ENCODE measurements at regions of chr11 and their contacts with region 1.

Region 1: GRCh38 chr11:17504330-17505107 is 27.9 kb upstream of the ABCC8 start:
- DNase-seq: peak; percentile 77
- ATAC-seq: peak; percentile 50 to 84 (median 70)
- H3K4me3 ChIP-seq: no peak overlapping the region
- H3K27ac ChIP-seq: no peak overlapping the region
- H3K4me1 ChIP-seq: peaks cover 0 to 27% (median 13%) of the 10 kb centered on the region in 9 donors
- H3K27me3 ChIP-seq: peaks cover 0 to 10% (median 0%) of the 10 kb centered on the region in 7 donors
- CTCF ChIP-seq: peak; percentile 81 to 94 (median 90)

Region 2: DNA sequence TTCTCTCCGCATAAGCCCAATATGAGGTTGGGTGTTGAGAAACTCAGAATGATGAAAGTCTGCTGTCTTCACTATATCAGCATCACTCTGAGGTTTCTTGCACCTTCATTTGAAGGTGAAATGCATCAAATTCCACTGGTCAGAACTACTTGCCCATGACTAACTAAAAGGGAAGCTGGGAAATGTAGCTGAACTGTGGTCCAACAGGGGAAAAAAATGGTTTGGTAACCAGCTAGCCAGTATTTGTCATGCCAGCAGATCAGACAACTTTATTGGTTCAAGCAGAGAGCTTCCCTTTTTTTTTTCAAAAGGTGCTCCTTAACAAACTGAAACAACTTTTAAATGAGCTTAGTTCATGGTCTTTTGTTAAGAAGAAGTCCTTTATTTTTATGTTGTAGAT is 282.6 kb before region 1 on chr11:
- intact Hi-C with region 1: loop called in 2 of 10 experiments (anchors 5 to 10 kb)
- DNase-seq: no peak
- ATAC-seq: no peak
- H3K4me3 ChIP-seq: no peak overlapping the region
- H3K27ac ChIP-seq: no peak overlapping the region
- H3K4me1 ChIP-seq: peaks cover 0 to 13% (median 0%) of the 10 kb centered on the region in 9 donors
- H3K27me3 ChIP-seq: no peaks in the 10 kb centered on the region
- CTCF ChIP-seq: no peak

Region 3: DNA sequence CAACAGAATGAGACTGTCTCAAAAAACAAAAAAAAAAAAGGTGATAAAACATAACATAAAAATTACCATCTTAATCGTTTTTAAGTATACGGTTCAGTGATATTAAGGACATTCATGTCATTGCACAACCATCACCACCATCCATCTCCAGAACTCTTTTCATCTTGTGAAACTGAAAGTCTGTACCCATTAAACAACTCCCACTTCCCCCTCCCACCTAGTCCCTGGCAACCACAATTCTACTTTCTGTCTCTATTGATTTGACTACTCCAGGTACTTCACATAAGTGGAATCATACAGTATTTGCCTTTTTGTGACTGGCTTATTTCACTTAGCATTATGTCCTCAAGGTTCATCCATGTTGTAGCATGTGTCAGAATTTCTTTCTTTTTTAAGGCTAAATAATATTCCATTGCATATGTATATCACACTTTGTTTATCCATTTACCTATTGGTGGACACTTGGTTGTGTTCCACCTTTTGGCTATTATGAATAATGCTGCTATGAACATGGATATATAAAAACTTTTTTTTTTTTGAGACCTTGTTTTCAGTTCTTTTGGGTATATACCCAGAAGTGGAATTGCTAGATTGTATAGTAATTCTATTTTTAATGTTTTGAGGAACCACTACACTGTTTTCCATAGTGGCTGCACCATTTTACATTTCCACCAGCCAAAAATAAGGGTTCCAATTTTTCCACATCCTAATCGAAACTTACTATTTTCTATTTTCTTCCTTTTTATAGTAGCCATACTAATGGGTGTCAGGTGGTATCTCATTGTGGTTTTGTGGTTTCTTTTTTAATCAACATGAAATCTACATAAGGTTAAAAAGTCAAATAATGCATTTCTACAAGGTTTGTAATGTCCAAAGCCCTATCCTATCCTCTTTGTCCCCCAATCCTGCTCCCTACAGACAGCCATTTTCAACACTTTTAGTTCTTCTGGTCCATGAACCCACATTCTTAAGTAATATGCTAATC is 273.4 kb before region 1 on chr11:
- intact Hi-C with region 1: loop called in 8 of 10 experiments (anchors 5 to 10 kb)
- DNase-seq: no peak
- ATAC-seq: no peak
- H3K4me3 ChIP-seq: no peak overlapping the region
- H3K27ac ChIP-seq: no peak overlapping the region
- H3K4me1 ChIP-seq: peaks cover 0 to 12% (median 0%) of the 10 kb centered on the region in 9 donors
- H3K27me3 ChIP-seq: no peaks in the 10 kb centered on the region
- CTCF ChIP-seq: no peak

Region 4: GRCh38 chr11:17300372-17300771 is 204.1 kb before region 1 on chr11:
- intact Hi-C with region 1: no loop called
- DNase-seq: no peak
- ATAC-seq: no peak
- H3K4me3 ChIP-seq: no peak overlapping the region
- H3K27ac ChIP-seq: no peak overlapping the region
- H3K4me1 ChIP-seq: no peaks in the 10 kb centered on the region
- H3K27me3 ChIP-seq: no peaks in the 10 kb centered on the region
- CTCF ChIP-seq: no peak

Region 5: DNA sequence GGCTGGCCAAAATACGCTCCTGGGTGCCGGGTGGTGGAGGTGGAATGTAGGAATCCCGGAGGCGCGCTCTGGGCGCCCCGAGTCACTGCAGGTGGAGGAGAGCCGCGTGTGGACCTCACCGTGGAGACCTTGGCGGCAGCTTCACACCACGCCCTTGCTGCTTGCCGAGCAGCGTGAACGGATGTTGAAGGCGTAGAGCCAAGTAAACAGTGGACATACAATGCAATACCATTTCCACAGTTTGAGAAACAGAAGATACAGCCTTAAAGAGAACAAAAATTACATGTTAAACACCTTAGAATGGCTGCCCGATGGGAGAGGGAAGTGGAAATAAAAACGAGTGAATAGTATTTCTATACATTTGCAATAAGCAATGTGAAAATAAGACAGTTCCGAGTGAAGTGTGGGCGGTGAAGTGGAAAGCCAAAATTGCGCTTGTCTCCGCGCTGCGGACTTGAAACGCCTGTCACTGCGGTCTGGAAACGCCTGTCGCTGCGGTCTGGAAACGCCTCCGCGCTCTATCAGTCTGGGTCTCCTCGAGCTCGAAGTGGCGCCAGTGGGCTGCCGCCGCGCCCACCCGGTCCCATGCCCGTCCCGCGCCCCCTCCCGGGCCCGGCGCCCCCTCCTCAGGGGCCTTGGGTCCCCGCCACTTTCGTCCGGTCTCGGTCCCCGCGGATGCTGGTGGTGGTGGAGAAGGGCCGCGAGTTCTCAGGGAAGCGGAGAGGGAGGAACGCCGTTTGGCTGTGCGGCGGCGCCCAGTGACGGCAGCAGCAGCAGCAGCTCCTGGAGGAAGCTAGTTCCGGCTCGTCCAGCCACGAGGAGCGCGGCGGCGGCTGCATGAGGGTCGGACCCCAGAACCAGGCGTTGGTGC is 151.3 kb before region 1 on chr11:
- intact Hi-C with region 1: no loop called
- DNase-seq: peak; percentile 72 to 76
- ATAC-seq: peak; percentile 82 to 90 (median 85)
- H3K4me3 ChIP-seq: peak overlapping the region; percentile 50 to 77 (median 71)
- H3K27ac ChIP-seq: peak overlapping the region; percentile 68 to 89 (median 83)
- H3K4me1 ChIP-seq: peaks cover 0 to 34% (median 16%) of the 10 kb centered on the region in 9 donors
- H3K27me3 ChIP-seq: peaks cover 0 to 4% (median 0%) of the 10 kb centered on the region in 7 donors
- CTCF ChIP-seq: no peak

Region 6: GRCh38 chr11:17384002-17384511 is 120.5 kb before region 1 on chr11:
- intact Hi-C with region 1: loop called (anchors 1 to 5 kb)
- DNase-seq: peak; percentile 78 to 83
- ATAC-seq: peak; percentile 23 to 60 (median 48)
- H3K4me3 ChIP-seq: no peak overlapping the region
- H3K27ac ChIP-seq: no peak overlapping the region
- H3K4me1 ChIP-seq: peaks cover 0 to 37% (median 8%) of the 10 kb centered on the region in 9 donors
- H3K27me3 ChIP-seq: peaks cover 0 to 15% (median 13%) of the 10 kb centered on the region in 7 donors
- CTCF ChIP-seq: peak; percentile 86 to 97 (median 93)

Region 7: GRCh38 chr11:17479284-17480214 is 25.0 kb before region 1 on chr11:
- intact Hi-C with region 1: loop called in 1 of 10 experiments (anchors 1 kb)
- DNase-seq: peak in 1 of 2 donors; percentile 43
- ATAC-seq: peak in 7 of 8 donors; percentile 44 to 82 (median 64)
- H3K4me3 ChIP-seq: peak overlapping the region in 3 of 10 donors; percentile 16 to 26 (median 26)
- H3K27ac ChIP-seq: no peak overlapping the region
- H3K4me1 ChIP-seq: peaks cover 0 to 12% (median 0%) of the 10 kb centered on the region in 9 donors
- H3K27me3 ChIP-seq: peaks cover 0 to 53% (median 36%) of the 10 kb centered on the region in 7 donors
- CTCF ChIP-seq: no peak

Measured in heart right ventricle (tissue), 16 donors.